CD14-positive monocyte (primary cell): ENCODE measurements at regions of chr17 and their contacts with region 1.

Region 1: DNA sequence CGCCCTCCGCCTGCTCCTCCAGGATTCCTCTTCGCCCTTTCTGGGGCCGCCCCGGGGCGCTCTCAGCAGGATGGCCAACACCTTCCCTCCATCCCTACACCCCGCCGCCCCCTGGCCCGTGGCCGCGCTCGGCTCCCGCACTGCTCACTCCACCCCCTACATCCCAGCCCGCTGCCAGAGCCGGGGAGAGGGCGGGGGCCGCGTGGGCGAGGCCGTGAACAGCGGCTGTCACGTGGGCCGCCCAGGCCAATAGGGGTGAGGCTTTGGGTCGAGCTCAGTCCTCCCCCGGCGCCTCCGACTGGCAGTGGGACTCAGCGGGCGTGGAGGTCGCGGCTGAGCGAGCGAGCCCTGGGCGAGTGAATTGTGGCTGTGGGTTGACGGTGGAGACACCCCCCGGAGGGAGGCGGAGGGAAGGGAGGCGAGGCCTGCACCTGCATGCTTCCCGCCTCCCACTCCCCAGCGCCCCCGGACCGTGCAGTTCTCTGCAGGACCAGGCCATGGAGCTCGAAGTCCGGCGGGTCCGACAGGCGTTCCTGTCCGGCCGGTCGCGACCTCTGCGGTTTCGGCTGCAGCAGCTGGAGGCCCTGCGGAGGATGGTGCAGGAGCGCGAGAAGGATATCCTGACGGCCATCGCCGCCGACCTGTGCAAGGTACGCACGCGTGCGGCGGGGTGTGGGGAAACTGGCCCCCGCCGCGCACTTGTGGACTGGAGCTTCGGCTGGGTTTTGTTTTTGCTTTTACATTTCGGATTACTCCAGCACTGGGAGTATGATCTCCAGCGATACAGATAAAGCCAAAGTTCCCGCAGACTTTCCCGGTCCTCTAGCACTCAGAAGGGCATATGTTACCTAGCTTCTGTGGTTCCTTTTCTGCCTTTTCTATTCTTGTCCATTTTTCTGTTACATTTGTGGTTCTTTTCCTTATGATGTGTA is at the start of gene ALDH3A2:
- DNase-seq: peak; percentile 87 to 88 (median 87)
- H3K4me3 ChIP-seq: peak within 1 kb of the TSS; percentile 49 to 89 (median 82)
- H3K4me3 Mint-ChIP-seq: peak within 1 kb of the TSS; percentile 98 to 99
- H3K27ac ChIP-seq: peak within 1 kb of the TSS; percentile 98 to 99
- H3K27ac Mint-ChIP-seq: peak within 1 kb of the TSS; percentile 98 to 100 (median 99)
- H3K4me1 ChIP-seq: peaks cover 28 to 55% of the 10 kb centered on the region in 2 donors
- H3K4me1 Mint-ChIP-seq: peaks cover 53% of the 10 kb centered on the region
- H3K27me3 ChIP-seq: no peaks in the 10 kb centered on the region
- H3K27me3 Mint-ChIP-seq: peaks cover 0 to 1% (median 0%) of the 10 kb centered on the region in 3 donors
- CTCF ChIP-seq: peak; percentile 3
- polyA plus RNA-seq, gene ALDH3A2: 22.5 to 58.0 (median 50.3) TPM

Region 2: DNA sequence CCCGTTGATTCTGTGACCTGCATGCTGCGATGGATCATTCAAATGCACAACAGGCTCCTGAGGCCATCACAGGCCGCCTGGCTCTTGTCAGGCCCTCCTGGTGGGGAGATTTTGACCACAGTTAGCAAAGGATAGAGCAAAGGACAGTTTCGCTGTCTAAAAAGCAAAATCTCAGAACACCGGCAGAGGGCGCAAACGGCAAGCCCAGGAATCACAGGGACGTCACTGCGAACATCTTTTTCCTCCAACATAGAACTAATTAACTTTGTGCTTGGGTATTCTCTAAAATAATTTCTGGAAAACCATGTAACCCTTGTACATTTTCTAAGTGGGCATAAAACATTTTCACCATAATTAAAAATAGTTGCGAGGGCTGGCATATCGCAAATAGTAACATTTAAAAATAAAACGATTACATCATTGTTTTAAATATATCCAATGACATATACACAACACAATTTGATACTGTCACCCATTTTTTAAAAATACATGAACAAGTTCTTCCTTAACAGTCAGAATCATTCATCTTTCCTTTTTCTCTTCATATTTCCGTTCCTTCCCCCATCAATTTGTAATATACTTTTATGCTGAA is 134.7 kb before region 1 on chr17:
- intact Hi-C with region 1: loop called (anchors 5 kb)
- DNase-seq: peak; percentile 63 to 70 (median 70)
- H3K4me3 ChIP-seq: no peak overlapping the region
- H3K4me3 Mint-ChIP-seq: no peak overlapping the region
- H3K27ac ChIP-seq: no peak overlapping the region
- H3K27ac Mint-ChIP-seq: peak overlapping the region in 2 of 7 donors; percentile 36 to 65
- H3K4me1 ChIP-seq: peaks cover 0 to under 1% of the 10 kb centered on the region in 2 donors
- H3K4me1 Mint-ChIP-seq: peaks cover 8% of the 10 kb centered on the region
- H3K27me3 ChIP-seq: no peaks in the 10 kb centered on the region
- H3K27me3 Mint-ChIP-seq: peaks cover 0 to 2% (median 0%) of the 10 kb centered on the region in 3 donors
- CTCF ChIP-seq: peak; percentile 96

Region 3: DNA sequence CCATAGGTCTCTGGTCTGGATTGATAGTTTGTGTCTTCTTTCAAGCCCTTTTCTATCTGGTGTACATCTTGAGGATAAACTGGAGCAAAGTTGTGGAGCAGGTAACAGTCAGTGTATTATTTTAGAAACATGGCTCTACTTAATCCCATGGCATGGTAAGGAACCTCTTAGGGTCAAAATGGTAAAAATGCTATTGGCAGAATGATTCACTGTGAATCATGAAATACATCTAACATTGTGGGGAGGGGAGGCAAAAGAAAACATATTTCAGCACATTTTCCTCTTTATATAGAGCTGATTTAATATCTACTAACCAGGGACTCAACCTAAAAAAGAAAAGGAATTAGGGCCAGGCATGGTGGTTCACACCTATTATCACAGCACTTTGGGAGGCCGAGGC is 18.1 kb before region 1 on chr17:
- intact Hi-C with region 1: no loop called
- DNase-seq: no peak
- H3K4me3 ChIP-seq: no peak overlapping the region
- H3K4me3 Mint-ChIP-seq: no peak overlapping the region
- H3K27ac ChIP-seq: no peak overlapping the region
- H3K27ac Mint-ChIP-seq: no peak overlapping the region
- H3K4me1 ChIP-seq: no peaks in the 10 kb centered on the region
- H3K4me1 Mint-ChIP-seq: no peaks in the 10 kb centered on the region
- H3K27me3 ChIP-seq: no peaks in the 10 kb centered on the region
- H3K27me3 Mint-ChIP-seq: peaks cover 1 to 3% (median 2%) of the 10 kb centered on the region in 3 donors
- CTCF ChIP-seq: no peak

Region 4: DNA sequence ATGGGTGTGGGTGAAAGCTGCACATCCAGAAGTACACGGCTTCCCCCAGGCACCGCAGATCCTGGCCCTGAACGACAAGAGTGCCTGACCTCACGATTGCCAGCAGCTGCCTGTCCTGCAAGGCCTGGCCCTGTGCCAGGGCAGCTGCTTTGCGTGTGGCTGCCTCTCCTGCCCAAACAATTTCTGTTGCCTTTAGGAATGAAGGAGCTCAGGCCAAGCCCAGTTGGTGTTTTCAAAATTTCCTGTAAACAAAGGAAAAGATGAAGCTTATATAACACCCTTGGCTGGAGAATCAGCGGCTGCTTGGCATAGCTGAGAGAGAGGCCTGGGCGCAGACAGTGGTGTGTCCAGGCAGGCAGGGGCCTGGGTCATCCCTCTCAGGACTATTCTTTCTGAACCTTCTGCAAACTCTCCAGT is 79.3 kb after region 1 on chr17:
- intact Hi-C with region 1: loop called in 1 of 2 experiments (anchors 10 kb)
- DNase-seq: peak; percentile 27 to 47 (median 29)
- H3K4me3 ChIP-seq: no peak overlapping the region
- H3K4me3 Mint-ChIP-seq: no peak overlapping the region
- H3K27ac ChIP-seq: peak overlapping the region in 1 of 2 donors; percentile 4
- H3K27ac Mint-ChIP-seq: peak overlapping the region in 4 of 7 donors; percentile 16 to 68 (median 58)
- H3K4me1 ChIP-seq: peaks cover 38 to 44% of the 10 kb centered on the region in 2 donors
- H3K4me1 Mint-ChIP-seq: peaks cover 48% of the 10 kb centered on the region
- H3K27me3 ChIP-seq: no peaks in the 10 kb centered on the region
- H3K27me3 Mint-ChIP-seq: no peaks in the 10 kb centered on the region
- CTCF ChIP-seq: no peak

Region 5: DNA sequence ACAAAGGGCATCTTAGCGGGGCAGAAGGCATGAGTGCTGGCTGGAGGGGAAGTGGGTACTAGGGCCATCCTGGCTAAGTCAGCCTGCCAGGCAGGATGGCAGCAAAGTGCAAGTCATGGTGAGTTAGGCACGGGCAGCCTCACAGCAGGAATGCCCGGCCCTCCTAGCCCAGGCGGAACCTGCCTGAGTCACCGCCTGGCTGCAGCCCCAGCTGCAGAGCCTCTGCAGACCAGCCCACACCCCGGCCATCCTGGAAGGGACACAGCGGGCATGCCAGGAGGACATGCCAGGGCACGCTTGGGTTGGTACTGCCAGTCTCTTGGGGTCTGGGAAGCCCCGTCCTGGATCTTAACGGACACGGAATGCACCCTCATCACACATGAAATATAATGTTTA is 104.3 kb after region 1 on chr17:
- intact Hi-C with region 1: loop called in 1 of 2 experiments (anchors 10 kb)
- DNase-seq: peak; percentile 85 to 94 (median 91)
- H3K4me3 ChIP-seq: no peak overlapping the region
- H3K4me3 Mint-ChIP-seq: peak overlapping the region in 1 of 2 donors; percentile 74
- H3K27ac ChIP-seq: no peak overlapping the region
- H3K27ac Mint-ChIP-seq: peak overlapping the region in 6 of 7 donors; percentile 3 to 70 (median 32)
- H3K4me1 ChIP-seq: peaks cover 16 to 17% of the 10 kb centered on the region in 2 donors
- H3K4me1 Mint-ChIP-seq: peaks cover 20% of the 10 kb centered on the region
- H3K27me3 ChIP-seq: no peaks in the 10 kb centered on the region
- H3K27me3 Mint-ChIP-seq: peaks cover 0 to 12% (median 0%) of the 10 kb centered on the region in 3 donors
- CTCF ChIP-seq: no peak

Region 6: GRCh38 chr17:19766422-19767270 is 117.9 kb after region 1 on chr17:
- intact Hi-C with region 1: no loop called
- DNase-seq: peak; percentile 53 to 67 (median 65)
- H3K4me3 ChIP-seq: no peak overlapping the region
- H3K4me3 Mint-ChIP-seq: no peak overlapping the region
- H3K27ac ChIP-seq: no peak overlapping the region
- H3K27ac Mint-ChIP-seq: no peak overlapping the region
- H3K4me1 ChIP-seq: no peaks in the 10 kb centered on the region
- H3K4me1 Mint-ChIP-seq: peaks cover 13% of the 10 kb centered on the region
- H3K27me3 ChIP-seq: no peaks in the 10 kb centered on the region
- H3K27me3 Mint-ChIP-seq: peaks cover 3 to 5% (median 4%) of the 10 kb centered on the region in 3 donors
- CTCF ChIP-seq: peak; percentile 97